SK-MEL-5 (cell line): ENCODE measurements at regions of chr1 and their contacts with region 1.

Region 1: DNA sequence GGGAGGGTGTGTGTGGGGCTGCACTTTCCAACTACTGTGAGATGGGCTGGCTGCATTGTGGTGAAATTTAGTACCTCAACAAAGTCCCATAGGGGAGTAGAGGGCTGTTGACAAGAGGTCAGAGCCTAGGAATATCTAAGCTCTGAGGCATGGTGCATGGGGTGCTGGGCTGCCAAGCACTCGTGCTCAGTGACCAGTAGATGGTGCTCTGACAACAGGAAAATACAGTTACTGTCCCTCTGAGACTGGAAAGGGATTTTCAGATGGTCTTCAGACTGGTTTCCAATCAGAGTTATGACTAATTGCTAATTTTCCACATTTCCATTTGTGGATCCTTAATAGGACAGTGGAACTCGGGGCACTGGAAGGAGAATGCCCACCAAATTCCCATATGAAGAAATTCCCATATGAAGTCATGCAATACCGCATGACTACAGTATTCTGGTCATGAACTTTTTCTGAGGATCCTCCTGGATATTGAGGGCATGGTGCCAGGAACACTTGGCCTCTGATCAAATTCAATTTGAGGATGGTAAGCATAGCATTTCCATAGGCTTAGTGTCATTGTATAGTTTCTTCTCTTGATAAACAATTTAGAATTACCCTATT is 4.1 kb upstream of the CACNA1E start:
- DNase-seq: peak; percentile 78

Region 2: DNA sequence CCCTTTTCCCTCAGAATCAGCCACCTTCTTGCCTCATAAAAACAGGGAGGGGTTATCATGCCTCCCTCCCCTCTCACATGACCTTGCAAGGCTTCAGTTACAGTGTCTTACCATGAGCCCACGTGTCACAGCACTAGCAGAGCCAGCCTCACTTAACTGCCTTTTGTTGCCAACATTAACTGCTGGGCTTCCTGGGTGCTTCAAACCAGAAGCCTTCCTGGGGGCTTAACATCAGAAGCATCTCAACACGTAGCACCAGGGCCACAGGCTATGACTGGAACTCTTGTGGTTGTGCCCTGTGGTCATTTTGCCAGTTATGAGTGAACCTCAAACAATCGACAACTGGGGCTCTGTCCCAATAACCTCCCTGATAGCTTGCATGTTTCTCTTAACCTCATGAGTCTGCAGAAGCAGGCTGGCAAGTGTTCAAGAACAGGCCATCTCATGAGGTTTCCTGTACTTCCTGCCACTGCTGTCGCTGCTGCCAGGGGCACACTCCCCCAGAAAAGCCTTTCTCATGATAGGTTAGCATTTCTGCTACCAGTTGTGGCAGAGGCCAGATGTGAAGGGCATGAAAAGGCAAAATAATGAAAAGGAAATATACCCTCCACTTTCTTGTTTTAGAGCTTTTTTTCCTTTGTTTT is 780.1 kb after region 1 on chr1:
- in situ Hi-C with region 1: loop called (anchors 25 kb)
- DNase-seq: peak; percentile 94